Activated CD8-positive, alpha-beta T cell treated with anti-CD3 and anti-CD28 coated beads for 36 hours (primary cell): ENCODE measurements at regions of chr18 and their contacts with region 1.

Region 1: DNA sequence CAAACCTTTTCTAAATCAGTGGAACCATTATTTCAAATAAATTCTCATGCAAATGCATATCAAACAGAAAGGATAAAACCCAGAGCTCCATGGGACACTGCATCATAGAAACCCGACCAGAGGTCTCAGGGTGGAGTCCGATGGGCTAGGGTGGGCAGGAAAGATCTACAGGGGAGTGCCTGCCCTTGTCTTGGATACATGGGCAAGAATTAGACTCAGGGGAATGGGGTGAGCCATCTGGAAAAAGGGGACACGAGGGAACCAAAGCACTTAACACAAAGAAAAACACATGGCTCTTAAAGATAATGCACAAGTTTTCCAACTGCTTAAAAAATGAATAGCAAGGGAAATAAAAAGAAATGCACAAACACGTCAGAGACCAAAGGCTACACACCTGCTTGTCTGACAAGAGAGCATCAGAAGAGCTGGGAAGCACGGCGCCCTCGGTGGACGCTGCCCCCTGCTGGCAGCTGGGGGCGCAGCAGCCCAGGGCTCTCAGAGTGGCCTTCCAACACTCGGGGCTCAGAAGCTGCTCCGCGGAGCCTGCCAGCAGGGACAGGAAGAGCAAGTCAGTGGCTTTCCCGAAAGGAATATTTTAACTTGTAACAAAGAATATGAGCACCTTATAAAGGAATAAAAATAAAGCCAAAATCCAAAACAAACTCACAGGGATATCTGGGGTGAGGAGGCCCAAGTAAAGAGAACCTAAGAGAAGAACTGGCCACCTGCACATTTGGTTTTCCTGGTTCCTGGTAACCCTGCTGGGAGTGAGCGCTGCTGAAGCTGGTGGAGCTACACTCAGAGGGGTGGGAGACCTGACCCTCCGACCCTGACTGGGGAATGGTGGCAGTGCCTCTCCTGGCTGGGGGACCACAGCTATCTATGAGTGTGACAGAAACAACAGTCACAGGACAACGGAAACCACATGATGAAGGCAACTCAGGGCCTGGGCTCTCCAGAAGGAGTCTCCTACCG is 54.5 kb downstream of the SIGLEC15 start:
- DNase-seq: peak; percentile 79
- ATAC-seq: peak; percentile 94
- H3K4me3 Mint-ChIP-seq: no peak overlapping the region
- H3K27ac Mint-ChIP-seq: no peak overlapping the region
- H3K4me1 Mint-ChIP-seq: peaks cover 17% of the 10 kb centered on the region
- H3K27me3 Mint-ChIP-seq: no peaks in the 10 kb centered on the region
- CTCF ChIP-seq: peak; percentile 100

Region 2: GRCh38 chr18:45657357-45658335 is 222.3 kb before region 1 on chr18:
- CTCF ChIA-PET with region 1: interaction called, 155 read pairs
- POLR2A ChIA-PET with region 1: no interaction called
- intact Hi-C with region 1: no loop called
- DNase-seq: peak; percentile 66
- ATAC-seq: peak; percentile 69
- H3K4me3 Mint-ChIP-seq: no peak overlapping the region
- H3K27ac Mint-ChIP-seq: no peak overlapping the region
- H3K4me1 Mint-ChIP-seq: peaks cover 24% of the 10 kb centered on the region
- H3K27me3 Mint-ChIP-seq: no peaks in the 10 kb centered on the region
- CTCF ChIP-seq: no peak

Region 3: GRCh38 chr18:45722899-45723298 is 157.1 kb before region 1 on chr18:
- CTCF ChIA-PET with region 1: interaction called, 113 read pairs
- POLR2A ChIA-PET with region 1: no interaction called
- intact Hi-C with region 1: no loop called
- DNase-seq: peak; percentile 85
- ATAC-seq: peak; percentile 100
- H3K4me3 Mint-ChIP-seq: no peak overlapping the region
- H3K27ac Mint-ChIP-seq: no peak overlapping the region
- H3K4me1 Mint-ChIP-seq: no peaks in the 10 kb centered on the region
- H3K27me3 Mint-ChIP-seq: peaks cover 6% of the 10 kb centered on the region
- CTCF ChIP-seq: peak; percentile 80

Region 4: DNA sequence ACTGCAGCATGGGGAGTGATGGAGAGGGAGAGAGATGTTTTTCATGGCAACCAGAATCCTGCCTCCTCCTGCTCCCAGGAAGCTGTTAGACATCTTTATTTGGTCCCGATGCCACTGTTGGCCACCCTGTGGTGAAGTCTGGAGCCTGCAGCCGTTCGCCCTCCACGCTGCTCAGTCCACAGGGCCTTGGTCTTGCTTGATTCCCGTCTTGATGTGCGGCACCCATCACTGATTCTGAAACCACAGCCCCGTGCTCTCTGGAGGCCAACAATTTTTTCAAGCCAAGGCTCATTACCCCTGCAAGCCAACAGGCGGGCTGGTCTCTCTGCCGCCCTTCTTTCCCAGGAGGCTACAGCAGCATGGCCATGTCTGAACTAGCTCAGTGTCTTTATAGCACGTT is 29.9 kb before region 1 on chr18:
- CTCF ChIA-PET with region 1: interaction called, 27 read pairs
- POLR2A ChIA-PET with region 1: no interaction called
- intact Hi-C with region 1: no loop called
- DNase-seq: no peak
- ATAC-seq: peak; percentile 34
- H3K4me3 Mint-ChIP-seq: no peak overlapping the region
- H3K27ac Mint-ChIP-seq: no peak overlapping the region
- H3K4me1 Mint-ChIP-seq: peaks cover 11% of the 10 kb centered on the region
- H3K27me3 Mint-ChIP-seq: no peaks in the 10 kb centered on the region
- CTCF ChIP-seq: no peak

Region 5: DNA sequence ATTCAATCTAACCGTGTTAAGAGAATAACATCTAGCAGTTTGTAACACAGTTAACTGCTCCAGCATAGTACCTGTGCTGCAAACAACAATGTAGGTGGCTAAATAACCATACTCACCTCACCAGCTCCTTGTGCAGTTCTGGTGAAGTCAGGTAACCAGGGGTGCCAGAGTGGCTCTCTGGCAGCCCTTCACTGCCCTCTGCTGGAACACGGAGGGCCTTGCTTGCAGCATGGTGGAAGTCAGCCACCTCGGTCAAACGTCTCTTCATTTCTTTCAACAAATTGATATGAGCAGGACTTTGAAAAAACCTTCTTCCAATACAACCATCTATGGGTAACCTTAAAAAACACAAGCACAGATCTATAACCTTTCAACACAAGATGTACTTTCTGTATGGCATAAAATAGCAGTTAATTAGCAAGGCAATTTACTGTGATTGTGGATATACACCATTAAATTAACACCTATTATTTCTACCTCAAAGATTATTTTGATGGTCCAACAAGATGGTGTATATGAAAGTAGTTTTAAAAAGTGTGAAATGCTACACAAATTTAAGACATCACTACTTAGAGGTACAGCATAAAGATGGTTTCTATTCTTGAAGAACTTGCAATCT is 30.5 kb after region 1 on chr18:
- CTCF ChIA-PET with region 1: interaction called, 14 read pairs
- POLR2A ChIA-PET with region 1: no interaction called
- intact Hi-C with region 1: no loop called
- DNase-seq: peak; percentile 73
- ATAC-seq: peak; percentile 94
- H3K4me3 Mint-ChIP-seq: no peak overlapping the region
- H3K27ac Mint-ChIP-seq: no peak overlapping the region
- H3K4me1 Mint-ChIP-seq: no peaks in the 10 kb centered on the region
- H3K27me3 Mint-ChIP-seq: no peaks in the 10 kb centered on the region
- CTCF ChIP-seq: peak; percentile 88

Region 6: GRCh38 chr18:45974088-45974536 is 94.1 kb after region 1 on chr18:
- CTCF ChIA-PET with region 1: interaction called, 10 read pairs
- POLR2A ChIA-PET with region 1: no interaction called
- intact Hi-C with region 1: loop called (anchors 10 kb)
- DNase-seq: peak; percentile 88
- ATAC-seq: peak; percentile 90
- H3K4me3 Mint-ChIP-seq: no peak overlapping the region
- H3K27ac Mint-ChIP-seq: peak overlapping the region; percentile 82
- H3K4me1 Mint-ChIP-seq: peaks cover 9% of the 10 kb centered on the region
- H3K27me3 Mint-ChIP-seq: no peaks in the 10 kb centered on the region
- CTCF ChIP-seq: peak; percentile 68

Region 7: GRCh38 chr18:46174342-46175041 is 294.5 kb after region 1 on chr18:
- CTCF ChIA-PET with region 1: no interaction called
- POLR2A ChIA-PET with region 1: no interaction called
- intact Hi-C with region 1: no loop called
- DNase-seq: peak; percentile 66
- ATAC-seq: peak; percentile 29
- H3K4me3 Mint-ChIP-seq: peak overlapping the region; percentile 94
- H3K27ac Mint-ChIP-seq: peak overlapping the region; percentile 98
- H3K4me1 Mint-ChIP-seq: peaks cover 32% of the 10 kb centered on the region
- H3K27me3 Mint-ChIP-seq: no peaks in the 10 kb centered on the region
- CTCF ChIP-seq: no peak